Sigmoid colon (tissue), 7 donors: ENCODE measurements at regions of chr9 and their contacts with region 1.

Region 1: DNA sequence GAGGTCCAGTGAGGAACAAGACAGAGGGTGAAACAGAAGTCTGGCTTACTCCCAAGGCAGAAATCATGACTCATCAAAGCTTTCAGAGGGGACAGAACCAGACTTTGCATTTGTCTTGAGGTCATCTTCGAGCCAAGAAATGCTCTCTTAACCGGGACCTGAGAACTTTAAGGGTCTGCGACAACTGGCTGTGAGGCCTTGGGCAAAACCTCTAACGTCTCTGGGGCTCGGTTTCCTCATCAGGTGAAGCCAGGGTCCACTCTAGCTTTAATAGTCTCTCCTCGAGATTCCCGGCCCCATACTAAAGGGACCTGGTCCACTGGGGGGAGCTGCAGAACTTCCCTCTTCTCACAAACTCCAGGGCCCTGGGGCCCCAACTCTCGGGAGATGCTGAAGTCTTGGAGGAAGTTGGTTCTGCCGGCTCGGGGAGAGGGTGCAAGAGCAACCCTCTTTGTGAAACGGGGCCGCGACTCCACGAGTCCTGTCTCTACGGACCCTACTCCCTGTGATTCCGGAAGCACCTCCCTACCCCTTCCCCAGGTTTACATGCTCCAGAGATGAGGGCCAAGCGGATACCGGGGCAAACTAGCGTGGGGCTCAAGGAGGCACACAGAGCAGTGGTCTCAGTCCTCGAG is 2.6 kb downstream of the GLIS3 start:
- DNase-seq: peak; percentile 91
- H3K4me3 ChIP-seq: peak overlapping the region; percentile 61 to 86 (median 66)
- H3K27ac ChIP-seq: peak overlapping the region; percentile 78 to 93 (median 92)
- H3K4me1 ChIP-seq: peaks cover 0 to 27% (median 9%) of the 10 kb centered on the region in 4 donors
- H3K27me3 ChIP-seq: no peaks in the 10 kb centered on the region
- CTCF ChIP-seq: peak in 2 of 4 experiments; percentile 22 to 33
- EP300 ChIP-seq: no peak
- POLR2A ChIP-seq: no peak

Region 2: DNA sequence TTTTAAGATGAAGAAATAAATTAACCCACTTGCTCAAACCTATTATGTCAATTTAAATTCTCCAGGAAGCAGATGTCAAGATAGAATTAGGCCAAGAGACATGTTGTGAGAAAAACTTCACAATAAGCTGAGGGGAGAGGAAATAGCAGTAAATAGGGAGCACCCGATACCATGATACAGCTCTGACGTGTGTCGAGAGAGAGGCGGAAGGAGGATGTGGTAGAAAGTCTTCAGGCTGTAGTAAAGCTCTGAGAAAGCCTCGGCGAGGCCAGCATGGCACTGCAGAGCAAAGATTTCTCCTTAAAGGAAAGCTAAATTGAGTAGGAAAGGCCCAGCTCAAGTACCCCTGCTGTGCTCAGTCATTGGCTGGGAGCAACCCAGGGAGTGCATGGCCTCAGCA is 1447.3 kb before region 1 on chr9:
- intact Hi-C with region 1: loop called (anchors 10 kb)
- DNase-seq: no peak
- H3K4me3 ChIP-seq: no peak overlapping the region
- H3K27ac ChIP-seq: no peak overlapping the region
- H3K4me1 ChIP-seq: peaks cover 0 to 11% (median 8%) of the 10 kb centered on the region in 4 donors
- H3K27me3 ChIP-seq: no peaks in the 10 kb centered on the region
- CTCF ChIP-seq: no peak
- EP300 ChIP-seq: no peak
- POLR2A ChIP-seq: no peak

Region 3: GRCh38 chr9:4077499-4078102 is 219.7 kb before region 1 on chr9:
- intact Hi-C with region 1: loop called (anchors 5 kb)
- DNase-seq: peak; percentile 89
- H3K4me3 ChIP-seq: no peak overlapping the region
- H3K27ac ChIP-seq: peak overlapping the region in 1 of 4 donors; percentile 25
- H3K4me1 ChIP-seq: peaks cover 0 to 24% (median 6%) of the 10 kb centered on the region in 4 donors
- H3K27me3 ChIP-seq: no peaks in the 10 kb centered on the region
- CTCF ChIP-seq: peak; percentile 10 to 60 (median 58)
- EP300 ChIP-seq: no peak
- POLR2A ChIP-seq: no peak

Region 4: DNA sequence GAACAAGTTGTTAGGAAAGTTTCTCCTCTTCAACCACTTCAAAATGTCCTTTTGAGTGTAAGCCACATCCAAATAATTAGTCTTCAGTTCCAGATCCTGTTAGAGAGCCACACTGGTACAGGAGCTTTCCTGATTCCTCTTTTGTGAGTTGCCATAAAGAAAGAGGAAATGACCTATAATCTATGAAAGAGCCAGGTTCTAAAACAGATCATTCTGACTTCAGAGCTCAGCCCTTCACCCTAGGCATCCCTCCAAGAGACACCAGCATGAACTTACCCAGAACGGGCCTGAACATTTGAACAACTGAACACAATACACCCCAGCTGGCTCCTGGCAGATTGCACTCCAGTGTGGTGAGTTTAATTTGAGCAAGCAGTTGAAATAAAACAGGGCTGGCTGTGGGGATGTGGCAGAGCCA is 218.7 kb after region 1 on chr9:
- intact Hi-C with region 1: no loop called
- DNase-seq: peak; percentile 83
- H3K4me3 ChIP-seq: no peak overlapping the region
- H3K27ac ChIP-seq: peak overlapping the region in 3 of 4 donors; percentile 38 to 75 (median 73)
- H3K4me1 ChIP-seq: peaks cover 0 to 15% (median 0%) of the 10 kb centered on the region in 4 donors
- H3K27me3 ChIP-seq: no peaks in the 10 kb centered on the region
- CTCF ChIP-seq: no peak
- EP300 ChIP-seq: peak in 1 of 4 donors; percentile 10
- POLR2A ChIP-seq: no peak

Region 5: GRCh38 chr9:4679268-4680172 is 382.3 kb after region 1 on chr9 and contains the start of gene CDC37L1:
- intact Hi-C with region 1: loop called (anchors 10 kb)
- DNase-seq: peak; percentile 99
- H3K4me3 ChIP-seq: peak within 1 kb of the TSS; percentile 69 to 96 (median 82)
- H3K27ac ChIP-seq: peak within 1 kb of the TSS; percentile 93 to 99 (median 98)
- H3K4me1 ChIP-seq: peaks cover 0 to 40% (median 21%) of the 10 kb centered on the region in 4 donors
- H3K27me3 ChIP-seq: no peaks in the 10 kb centered on the region
- CTCF ChIP-seq: peak; percentile 70 to 82 (median 76)
- EP300 ChIP-seq: peak in 2 of 4 donors; percentile 34 to 64
- POLR2A ChIP-seq: peak; percentile 95 to 96
- total RNA-seq, gene CDC37L1: 30.7 to 40.6 (median 33.3) TPM